K562 (cell line): ENCODE measurements at regions of chr11 and their contacts with region 1.

Region 1: GRCh38 chr11:62855571-62856332 is 16.4 kb upstream of the WDR74 start:
- DNase-seq: peak; percentile 92 to 99 (median 96)
- ATAC-seq: peak; percentile 77
- H3K4me3 ChIP-seq: peak overlapping the region; percentile 74
- H3K27ac ChIP-seq: peak overlapping the region; percentile 99
- H3K4me1 ChIP-seq: peaks cover 5 to 21% of the 10 kb centered on the region in 2 experiments; a peak in 3 of 5 replicates
- H3K27me3 ChIP-seq: no peaks in the 10 kb centered on the region
- CTCF ChIP-seq: no peak
- EP300 ChIP-seq: peak; percentile 38; the same call in 1 of the 2 replicates
- POLR2A ChIP-seq: peak; percentile 100
- RAD21 ChIP-seq: no peak; a peak in 1 of 4 replicates

Region 2: GRCh38 chr11:62771144-62772021 is 84.4 kb before region 1 on chr11 and contains the start of gene TAF6L:
- CTCF ChIA-PET with region 1: no interaction called
- POLR2A ChIA-PET with region 1: interaction called, 13 read pairs
- in situ Hi-C with region 1: no loop called
- intact Hi-C with region 1: no loop called
- DNase-seq: peak; percentile 97 to 99 (median 98)
- ATAC-seq: peak; percentile 95
- H3K4me3 ChIP-seq: peak within 1 kb of the TSS; percentile 48
- H3K27ac ChIP-seq: peak within 1 kb of the TSS; percentile 88
- H3K4me1 ChIP-seq: peaks cover 9 to 24% of the 10 kb centered on the region in 2 experiments
- H3K27me3 ChIP-seq: no peaks in the 10 kb centered on the region
- CTCF ChIP-seq: no peak; a peak in 1 of 6 replicates
- EP300 ChIP-seq: no peak; the same call in 1 of the 2 replicates
- POLR2A ChIP-seq: peak; percentile 86
- RAD21 ChIP-seq: peak in 1 of 2 experiments; percentile 20; a peak in 2 of 4 replicates
- polyA plus RNA-seq, gene TAF6L: 0.04 to 0.25 TPM

Region 3: GRCh38 chr11:62799486-62799885 is 56.3 kb before region 1 on chr11:
- CTCF ChIA-PET with region 1: no interaction called
- POLR2A ChIA-PET with region 1: interaction called, 19 read pairs
- in situ Hi-C with region 1: no loop called
- intact Hi-C with region 1: no loop called
- DNase-seq: no peak
- ATAC-seq: no peak
- H3K4me3 ChIP-seq: no peak overlapping the region
- H3K27ac ChIP-seq: no peak overlapping the region
- H3K4me1 ChIP-seq: peaks cover 0 to 8% of the 10 kb centered on the region in 2 experiments; a peak in 2 of 5 replicates
- H3K27me3 ChIP-seq: no peaks in the 10 kb centered on the region
- CTCF ChIP-seq: no peak
- EP300 ChIP-seq: no peak
- POLR2A ChIP-seq: no peak
- RAD21 ChIP-seq: no peak

Region 4: GRCh38 chr11:62831520-62832335 is 24.0 kb before region 1 on chr11 and contains the start of gene STX5:
- CTCF ChIA-PET with region 1: no interaction called
- POLR2A ChIA-PET with region 1: interaction called, 53 read pairs
- in situ Hi-C with region 1: no loop called
- intact Hi-C with region 1: no loop called
- DNase-seq: peak; percentile 94 to 99 (median 96)
- ATAC-seq: peak; percentile 94
- H3K4me3 ChIP-seq: peak within 1 kb of the TSS; percentile 94
- H3K27ac ChIP-seq: peak within 1 kb of the TSS; percentile 98
- H3K4me1 ChIP-seq: peaks cover 7 to 17% of the 10 kb centered on the region in 2 experiments; a peak in 4 of 5 replicates
- H3K27me3 ChIP-seq: no peaks in the 10 kb centered on the region
- CTCF ChIP-seq: no peak
- EP300 ChIP-seq: no peak
- POLR2A ChIP-seq: peak; percentile 92
- RAD21 ChIP-seq: no peak
- polyA plus RNA-seq, gene STX5: 2.8 to 3.6 TPM

Region 5: DNA sequence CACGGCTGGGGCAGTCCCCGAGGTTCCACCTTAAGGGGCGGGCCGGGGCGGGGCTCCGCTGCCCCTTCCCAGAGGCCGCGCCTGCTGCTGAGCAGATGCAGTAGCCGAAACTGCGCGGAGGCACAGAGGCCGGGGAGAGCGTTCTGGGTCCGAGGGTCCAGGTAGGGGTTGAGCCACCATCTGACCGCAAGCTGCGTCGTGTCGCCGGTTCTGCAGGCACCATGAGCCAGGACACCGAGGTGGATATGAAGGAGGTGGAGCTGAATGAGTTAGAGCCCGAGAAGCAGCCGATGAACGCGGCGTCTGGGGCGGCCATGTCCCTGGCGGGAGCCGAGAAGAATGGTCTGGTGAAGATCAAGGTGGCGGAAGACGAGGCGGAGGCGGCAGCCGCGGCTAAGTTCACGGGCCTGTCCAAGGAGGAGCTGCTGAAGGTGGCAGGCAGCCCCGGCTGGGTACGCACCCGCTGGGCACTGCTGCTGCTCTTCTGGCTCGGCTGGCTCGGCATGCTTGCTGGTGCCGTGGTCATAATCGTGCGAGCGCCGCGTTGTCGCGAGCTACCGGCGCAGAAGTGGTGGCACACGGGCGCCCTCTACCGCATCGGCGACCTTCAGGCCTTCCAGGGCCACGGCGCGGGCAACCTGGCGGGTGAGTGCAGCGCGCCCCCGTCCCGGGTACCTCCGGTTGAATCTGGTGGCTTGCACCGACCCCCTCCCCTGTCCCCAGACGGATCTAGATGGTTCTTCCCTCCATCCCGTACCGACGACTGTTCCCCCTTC is 25.2 kb after region 1 on chr11 and contains the start of gene SLC3A2:
- CTCF ChIA-PET with region 1: no interaction called
- POLR2A ChIA-PET with region 1: interaction called, 180 read pairs
- in situ Hi-C with region 1: no loop called
- intact Hi-C with region 1: no loop called
- DNase-seq: peak; percentile 83 to 95 (median 86)
- ATAC-seq: peak; percentile 88
- H3K4me3 ChIP-seq: peak within 1 kb of the TSS; percentile 56
- H3K27ac ChIP-seq: peak within 1 kb of the TSS; percentile 95
- H3K4me1 ChIP-seq: peaks cover 56 to 58% of the 10 kb centered on the region in 2 experiments
- H3K27me3 ChIP-seq: no peaks in the 10 kb centered on the region
- CTCF ChIP-seq: peak; percentile 72 to 80 (median 77)
- EP300 ChIP-seq: no peak
- POLR2A ChIP-seq: peak; percentile 99
- RAD21 ChIP-seq: peak; percentile 24 to 43; a peak in 2 of 4 replicates
- polyA plus RNA-seq, gene SLC3A2: 20.0 to 39.7 TPM